ENCODE measurements at regions of chr4 and their contacts with region 1.

Region 1: GRCh38 chr4:72582853-72583252 is 13.8 kb upstream of the ADAMTS3 start:
- DNase-seq: no peak
- H3K4me3 ChIP-seq: no peak overlapping the region
- H3K27me3 ChIP-seq: no peaks in the 10 kb centered on the region; the same call in 1 of the 2 replicates
- CTCF ChIP-seq: no peak

Region 2: GRCh38 chr4:72604324-72604723 is 21.5 kb after region 1 on chr4:
- CTCF ChIA-PET with region 1: no interaction called
- POLR2A ChIA-PET with region 1: no interaction called
- DNase-seq: no peak
- H3K4me3 ChIP-seq: no peak overlapping the region
- H3K27me3 ChIP-seq: no peaks in the 10 kb centered on the region
- CTCF ChIP-seq: no peak

Region 3: DNA sequence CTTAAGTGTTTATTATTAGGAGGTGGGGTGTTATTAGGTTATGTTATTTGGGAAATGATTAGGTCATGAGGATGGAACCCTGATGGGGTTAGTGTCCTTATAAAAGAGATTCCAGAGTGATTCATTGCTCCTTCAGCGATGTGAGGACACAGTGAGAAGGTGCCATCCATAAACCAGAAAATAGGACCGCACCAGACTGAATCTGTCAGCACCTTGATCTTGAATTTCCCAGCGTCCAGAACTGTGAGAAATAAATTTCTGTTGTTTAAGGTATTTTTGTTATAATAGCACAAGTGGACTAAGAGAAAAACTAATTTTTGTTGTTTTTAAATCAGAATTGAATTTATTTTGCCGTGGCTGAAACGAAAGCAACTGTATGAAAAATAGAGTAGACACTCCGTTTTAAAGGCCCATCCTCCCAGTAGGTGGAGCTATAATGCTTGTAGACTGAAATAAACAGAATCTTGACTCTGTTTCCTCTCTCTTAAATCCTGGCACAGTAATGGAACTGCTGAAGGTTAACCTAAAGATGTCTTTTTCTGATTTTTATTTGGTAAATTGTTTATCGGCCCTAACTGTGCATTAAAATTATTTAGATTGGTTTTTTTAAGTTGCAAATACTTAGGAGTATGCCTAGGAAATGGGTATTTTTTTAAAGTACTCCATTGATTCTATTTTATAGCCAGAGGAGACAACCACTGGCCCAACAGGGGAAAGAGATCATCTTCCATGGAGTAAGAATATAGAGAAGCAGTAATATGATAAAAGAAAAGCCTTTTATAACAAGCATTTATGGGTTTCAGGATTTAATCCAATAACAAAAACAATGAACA is 119.3 kb after region 1 on chr4:
- CTCF ChIA-PET with region 1: no interaction called
- POLR2A ChIA-PET with region 1: no interaction called
- DNase-seq: peak; percentile 9
- H3K4me3 ChIP-seq: peak overlapping the region; percentile 45
- H3K27me3 ChIP-seq: no peaks in the 10 kb centered on the region
- CTCF ChIP-seq: peak; percentile 66

Region 4: GRCh38 chr4:72712997-72713396 is 130.1 kb after region 1 on chr4:
- CTCF ChIA-PET with region 1: no interaction called
- POLR2A ChIA-PET with region 1: interaction called, 26 read pairs
- DNase-seq: no peak
- H3K4me3 ChIP-seq: no peak overlapping the region
- H3K27me3 ChIP-seq: no peaks in the 10 kb centered on the region
- CTCF ChIP-seq: no peak

Measured in BJ (cell line).